ENCODE measurements at regions of chr22 and their contacts with region 1.

Region 1: GRCh38 chr22:22848364-22848866 is 39.2 kb upstream of the IGLL5 start:
- DNase-seq: peak; percentile 74
- H3K4me3 Mint-ChIP-seq: no peak overlapping the region
- H3K27ac Mint-ChIP-seq: no peak overlapping the region
- H3K4me1 Mint-ChIP-seq: peaks cover 7% of the 10 kb centered on the region
- H3K27me3 Mint-ChIP-seq: peaks cover 28% of the 10 kb centered on the region

Region 2: GRCh38 chr22:22753526-22754267 is 94.7 kb before region 1 on chr22:
- CTCF ChIA-PET with region 1: interaction called, 12 read pairs
- POLR2A ChIA-PET with region 1: no interaction called
- DNase-seq: peak; percentile 83
- H3K4me3 Mint-ChIP-seq: no peak overlapping the region
- H3K27ac Mint-ChIP-seq: no peak overlapping the region
- H3K4me1 Mint-ChIP-seq: peaks cover 6% of the 10 kb centered on the region
- H3K27me3 Mint-ChIP-seq: no peaks in the 10 kb centered on the region

Region 3: DNA sequence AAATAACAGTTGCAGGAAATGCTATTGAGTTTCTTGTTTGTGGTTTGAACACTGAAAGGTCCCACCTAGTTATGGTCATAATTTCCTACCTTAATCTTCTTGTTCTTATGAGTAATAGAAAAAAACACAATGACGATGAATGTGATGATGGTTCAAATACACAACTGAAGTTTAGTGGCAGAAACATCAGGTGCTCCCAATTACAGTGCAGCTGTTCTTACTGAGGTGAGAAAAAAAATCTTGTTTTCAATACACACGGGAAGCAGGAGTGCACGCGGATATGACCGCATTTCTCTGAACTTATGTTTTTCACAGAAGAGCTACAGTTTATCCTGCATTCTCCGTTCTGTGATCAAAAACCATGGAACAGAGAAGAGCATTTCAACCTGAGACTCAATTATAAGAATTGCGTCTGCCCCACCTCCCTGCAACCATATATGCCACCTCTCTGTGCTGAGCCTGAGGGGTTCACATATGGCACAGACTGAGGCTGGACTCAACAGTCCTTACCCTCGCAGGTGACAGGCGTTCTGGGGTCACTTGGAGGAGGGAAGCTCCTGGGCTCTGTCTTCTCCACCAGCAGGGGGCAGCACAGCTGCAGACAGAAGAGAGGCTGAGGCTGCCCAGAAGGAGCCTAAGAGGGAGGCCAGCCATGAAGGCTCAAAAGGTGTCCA is 60.5 kb before region 1 on chr22:
- CTCF ChIA-PET with region 1: interaction called, 30 read pairs
- POLR2A ChIA-PET with region 1: no interaction called
- DNase-seq: peak; percentile 75
- H3K4me3 Mint-ChIP-seq: no peak overlapping the region
- H3K27ac Mint-ChIP-seq: peak overlapping the region; percentile 62
- H3K4me1 Mint-ChIP-seq: peaks cover 41% of the 10 kb centered on the region
- H3K27me3 Mint-ChIP-seq: peaks cover 14% of the 10 kb centered on the region

Region 4: DNA sequence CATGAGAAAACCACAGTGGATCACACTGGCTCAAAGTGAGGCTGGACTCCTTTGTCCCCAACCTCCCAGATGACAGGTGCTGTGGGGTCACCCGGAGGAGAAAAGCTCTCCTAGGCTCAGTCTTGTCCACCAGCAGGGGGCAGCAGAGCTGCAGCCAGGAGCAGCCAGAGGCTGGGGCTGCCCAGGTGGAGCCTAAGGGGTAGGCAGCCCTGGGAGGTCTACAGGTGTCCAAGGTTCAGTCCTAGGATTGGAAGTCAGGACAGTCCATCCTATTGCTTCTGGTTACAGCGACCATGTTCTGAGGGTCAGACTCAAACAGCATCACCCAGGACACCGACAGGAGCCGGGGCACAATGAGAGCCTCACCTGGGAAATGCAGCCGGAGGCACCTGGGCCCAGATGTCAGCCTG is 38.4 kb before region 1 on chr22:
- CTCF ChIA-PET with region 1: interaction called, 127 read pairs
- POLR2A ChIA-PET with region 1: interaction called, 4 read pairs
- DNase-seq: peak; percentile 82
- H3K4me3 Mint-ChIP-seq: no peak overlapping the region
- H3K27ac Mint-ChIP-seq: no peak overlapping the region
- H3K4me1 Mint-ChIP-seq: peaks cover 8% of the 10 kb centered on the region
- H3K27me3 Mint-ChIP-seq: peaks cover 29% of the 10 kb centered on the region

Region 5: DNA sequence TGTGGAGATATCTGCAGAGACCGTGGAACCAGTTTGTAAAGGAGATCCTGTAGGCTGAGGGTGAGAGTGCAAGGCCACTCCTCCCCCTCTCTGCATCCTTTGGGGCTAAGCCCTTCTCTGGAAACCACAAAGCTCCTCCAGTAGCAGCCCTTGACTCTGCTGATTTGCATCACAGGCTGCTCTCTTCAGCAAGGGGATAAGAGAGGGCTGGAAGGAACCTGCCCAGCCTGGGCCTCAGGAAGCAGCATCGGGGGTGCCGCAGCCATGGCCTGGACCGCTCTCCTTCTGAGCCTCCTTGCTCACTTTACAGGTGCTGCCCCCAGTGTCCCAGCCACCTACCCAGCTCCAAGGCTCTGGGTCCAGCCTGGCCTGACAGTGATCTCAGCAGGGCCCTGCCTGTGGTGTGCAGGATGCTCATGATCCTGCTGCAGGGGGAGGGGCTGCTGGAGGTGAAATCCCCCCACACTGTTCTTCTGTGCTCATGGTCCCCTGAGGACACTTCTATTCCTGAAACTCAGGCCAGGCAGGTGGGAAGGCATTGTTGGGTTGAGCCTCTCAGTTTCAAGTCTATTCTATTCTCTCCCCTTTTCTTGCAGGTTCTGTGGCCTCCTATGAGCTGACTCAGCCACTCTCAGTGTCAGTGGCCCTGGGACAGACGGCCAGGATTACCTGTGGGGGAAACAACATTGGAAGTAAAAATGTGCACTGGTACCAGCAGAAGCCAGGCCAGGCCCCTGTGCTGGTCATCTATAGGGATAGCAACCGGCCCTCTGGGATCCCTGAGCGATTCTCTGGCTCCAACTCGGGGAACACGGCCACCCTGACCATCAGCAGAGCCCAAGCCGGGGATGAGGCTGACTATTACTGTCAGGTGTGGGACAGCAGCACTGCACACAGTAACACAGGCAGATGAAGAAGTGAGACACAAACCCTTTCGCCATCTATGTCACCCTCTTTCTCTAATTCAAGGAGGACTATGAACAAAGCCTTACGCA is 29.3 kb before region 1 on chr22:
- CTCF ChIA-PET with region 1: interaction called, 127 read pairs
- POLR2A ChIA-PET with region 1: interaction called, 12 read pairs
- DNase-seq: peak; percentile 76
- H3K4me3 Mint-ChIP-seq: peak overlapping the region; percentile 72
- H3K27ac Mint-ChIP-seq: peak overlapping the region; percentile 96
- H3K4me1 Mint-ChIP-seq: peaks cover 87% of the 10 kb centered on the region
- H3K27me3 Mint-ChIP-seq: no peaks in the 10 kb centered on the region

Region 6: DNA sequence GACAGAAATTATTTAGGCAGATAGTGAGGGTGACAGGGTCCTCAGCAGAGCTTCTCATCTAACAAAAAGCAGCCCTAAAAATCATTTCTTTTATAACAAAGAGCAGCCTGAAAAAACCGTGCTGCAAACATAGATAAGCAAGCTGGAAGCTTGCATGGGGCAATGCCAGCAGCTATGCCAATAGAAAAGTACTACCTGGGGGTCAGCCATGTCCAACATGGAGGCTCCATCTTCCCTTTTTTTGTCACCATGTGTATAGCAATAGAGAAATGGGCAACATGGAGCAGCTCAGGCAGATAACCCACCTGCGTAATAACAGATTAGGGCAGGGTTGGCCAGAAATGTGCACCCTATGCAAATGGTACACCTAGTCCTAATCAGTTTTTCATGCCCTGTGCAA is 18.2 kb before region 1 on chr22:
- CTCF ChIA-PET with region 1: interaction called, 10 read pairs
- POLR2A ChIA-PET with region 1: no interaction called
- DNase-seq: no peak
- H3K4me3 Mint-ChIP-seq: no peak overlapping the region
- H3K27ac Mint-ChIP-seq: no peak overlapping the region
- H3K4me1 Mint-ChIP-seq: peaks cover 7% of the 10 kb centered on the region
- H3K27me3 Mint-ChIP-seq: peaks cover 41% of the 10 kb centered on the region

Region 7: GRCh38 chr22:22838148-22838786 is 10.1 kb before region 1 on chr22:
- CTCF ChIA-PET with region 1: interaction called, 11 read pairs
- POLR2A ChIA-PET with region 1: no interaction called
- DNase-seq: no peak
- H3K4me3 Mint-ChIP-seq: no peak overlapping the region
- H3K27ac Mint-ChIP-seq: no peak overlapping the region
- H3K4me1 Mint-ChIP-seq: peaks cover 15% of the 10 kb centered on the region
- H3K27me3 Mint-ChIP-seq: peaks cover 34% of the 10 kb centered on the region